H1 (cell line): ENCODE measurements at regions of chr17 and their contacts with region 1.

Region 1: DNA sequence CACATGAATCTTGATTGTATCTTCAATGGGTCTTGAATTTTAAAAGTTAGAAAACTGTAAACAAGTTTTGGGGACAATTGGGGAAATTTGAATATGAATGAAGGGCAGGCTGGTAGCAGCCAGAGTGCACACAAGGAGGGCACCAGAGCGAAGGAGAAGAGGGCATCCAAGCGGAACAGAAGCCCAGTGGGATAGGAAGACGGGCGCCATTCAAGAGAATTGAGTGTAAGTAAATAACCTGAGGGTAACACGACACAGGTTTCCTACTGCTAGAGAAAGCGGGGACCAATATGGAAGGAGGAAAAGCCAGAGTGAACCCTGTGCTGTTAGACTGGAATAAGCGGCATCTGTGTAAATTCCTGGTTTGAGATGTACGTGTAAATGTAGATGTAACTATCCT is 115.1 kb upstream of the CCL2 start:
- DNase-seq: no peak
- H3K4me3 ChIP-seq: no peak overlapping the region
- H3K27ac ChIP-seq: no peak overlapping the region
- H3K4me1 ChIP-seq: peaks cover 2 to 19% (median 10%) of the 10 kb centered on the region in 4 experiments; a peak in 4 of 7 replicates
- H3K27me3 ChIP-seq: no peaks in the 10 kb centered on the region
- CTCF ChIP-seq: no peak
- EP300 ChIP-seq: no peak
- POLR2A ChIP-seq: no peak
- RAD21 ChIP-seq: no peak

Region 2: DNA sequence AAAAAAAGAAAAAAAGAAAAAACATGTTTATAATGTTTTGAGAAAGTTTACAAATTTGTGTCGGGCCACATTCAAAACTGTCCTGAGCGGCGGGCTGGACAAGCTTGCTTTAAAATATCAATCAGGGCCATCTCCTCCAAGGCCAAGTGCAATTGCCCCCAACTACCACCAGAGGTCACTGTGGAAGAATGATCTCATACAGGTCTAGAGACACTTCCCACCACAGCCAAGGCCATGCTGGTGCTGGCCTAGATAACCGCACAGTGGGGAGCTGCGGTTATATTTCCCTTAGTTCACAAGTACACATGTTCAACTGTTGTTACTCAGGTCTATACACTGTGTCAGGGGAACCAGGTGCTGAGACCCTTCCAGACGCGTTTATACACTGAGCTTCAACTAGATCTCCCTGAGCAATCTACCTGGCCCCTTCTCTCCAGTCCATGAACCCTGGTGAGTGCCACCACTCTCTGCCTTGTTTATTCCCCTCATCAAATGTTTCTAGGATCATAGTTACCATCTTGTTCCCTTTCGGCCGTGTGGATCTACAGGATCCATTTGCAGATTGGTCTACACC is 31.3 kb after region 1 on chr17:
- CTCF ChIA-PET with region 1: interaction called, 78 read pairs
- POLR2A ChIA-PET with region 1: interaction called, 3 read pairs
- DNase-seq: peak in 1 of 2 experiments; percentile 82
- H3K4me3 ChIP-seq: no peak overlapping the region
- H3K27ac ChIP-seq: no peak overlapping the region
- H3K4me1 ChIP-seq: no peaks in the 10 kb centered on the region
- H3K27me3 ChIP-seq: no peaks in the 10 kb centered on the region
- CTCF ChIP-seq: peak; percentile 69 to 90 (median 80)
- EP300 ChIP-seq: no peak
- POLR2A ChIP-seq: no peak
- RAD21 ChIP-seq: peak; percentile 49 to 69

Region 3: GRCh38 chr17:34235389-34236028 is 95.5 kb after region 1 on chr17:
- CTCF ChIA-PET with region 1: no interaction called
- POLR2A ChIA-PET with region 1: no interaction called
- DNase-seq: no peak
- H3K4me3 ChIP-seq: no peak overlapping the region
- H3K27ac ChIP-seq: no peak overlapping the region
- H3K4me1 ChIP-seq: peaks cover 0 to 2% (median 0%) of the 10 kb centered on the region in 4 experiments; a peak in 1 of 7 replicates
- H3K27me3 ChIP-seq: no peaks in the 10 kb centered on the region
- CTCF ChIP-seq: no peak
- EP300 ChIP-seq: no peak
- POLR2A ChIP-seq: no peak
- RAD21 ChIP-seq: no peak